ENCODE measurements at regions of chr17 and their contacts with region 1.

Region 1: GRCh38 chr17:5584383-5585286 is at the start of gene NLRP1:
- DNase-seq: peak; percentile 93
- CTCF ChIP-seq: no peak

Region 2: GRCh38 chr17:5355421-5356129 is 229.1 kb before region 1 on chr17:
- in situ Hi-C with region 1: no loop called
- DNase-seq: no peak
- CTCF ChIP-seq: no peak

Region 3: DNA sequence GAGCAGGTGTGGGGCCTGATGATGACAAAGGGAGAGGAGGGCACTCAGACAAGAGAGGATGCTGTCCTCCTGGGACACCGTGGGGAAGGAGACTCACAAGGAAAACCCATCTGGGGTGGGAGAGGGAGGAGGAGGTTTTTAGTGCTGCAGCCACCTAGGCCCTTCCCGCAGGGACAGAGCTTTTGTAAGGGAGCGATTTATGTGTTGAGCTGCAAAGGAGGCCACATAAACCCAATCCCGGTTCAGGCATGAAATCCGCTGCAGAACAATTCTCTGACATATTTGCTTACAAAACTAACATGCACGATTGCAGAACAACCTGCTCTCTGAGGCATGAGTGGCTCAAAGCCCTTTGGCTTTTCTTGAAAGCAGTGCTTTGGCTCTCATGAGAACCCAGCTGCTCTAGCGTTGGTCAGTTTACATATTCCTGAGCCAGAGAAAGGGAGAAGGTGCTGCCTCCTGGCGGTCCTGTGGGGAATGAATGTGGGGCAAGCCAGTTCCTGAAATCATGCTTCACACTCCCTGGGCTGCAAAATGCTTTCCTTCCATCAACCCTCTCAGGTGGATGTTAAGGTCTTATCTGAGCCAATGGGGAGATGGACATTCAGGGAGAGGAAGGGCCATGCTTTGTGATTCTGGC is 122.1 kb after region 1 on chr17:
- in situ Hi-C with region 1: loop called (anchors 10 kb)
- DNase-seq: peak; percentile 72
- CTCF ChIP-seq: peak; percentile 53

Region 4: GRCh38 chr17:6402258-6402657 is 817.6 kb after region 1 on chr17:
- in situ Hi-C with region 1: loop called (anchors 10 kb)
- DNase-seq: no peak
- CTCF ChIP-seq: no peak